BJ (cell line): ENCODE measurements at regions of chr16 and their contacts with region 1.

Region 1: GRCh38 chr16:85393674-85394483 is 219.2 kb upstream of the GSE1 start:
- DNase-seq: no peak
- H3K4me3 ChIP-seq: no peak overlapping the region
- H3K27me3 ChIP-seq: no peaks in the 10 kb centered on the region
- CTCF ChIP-seq: peak; percentile 96

Region 2: DNA sequence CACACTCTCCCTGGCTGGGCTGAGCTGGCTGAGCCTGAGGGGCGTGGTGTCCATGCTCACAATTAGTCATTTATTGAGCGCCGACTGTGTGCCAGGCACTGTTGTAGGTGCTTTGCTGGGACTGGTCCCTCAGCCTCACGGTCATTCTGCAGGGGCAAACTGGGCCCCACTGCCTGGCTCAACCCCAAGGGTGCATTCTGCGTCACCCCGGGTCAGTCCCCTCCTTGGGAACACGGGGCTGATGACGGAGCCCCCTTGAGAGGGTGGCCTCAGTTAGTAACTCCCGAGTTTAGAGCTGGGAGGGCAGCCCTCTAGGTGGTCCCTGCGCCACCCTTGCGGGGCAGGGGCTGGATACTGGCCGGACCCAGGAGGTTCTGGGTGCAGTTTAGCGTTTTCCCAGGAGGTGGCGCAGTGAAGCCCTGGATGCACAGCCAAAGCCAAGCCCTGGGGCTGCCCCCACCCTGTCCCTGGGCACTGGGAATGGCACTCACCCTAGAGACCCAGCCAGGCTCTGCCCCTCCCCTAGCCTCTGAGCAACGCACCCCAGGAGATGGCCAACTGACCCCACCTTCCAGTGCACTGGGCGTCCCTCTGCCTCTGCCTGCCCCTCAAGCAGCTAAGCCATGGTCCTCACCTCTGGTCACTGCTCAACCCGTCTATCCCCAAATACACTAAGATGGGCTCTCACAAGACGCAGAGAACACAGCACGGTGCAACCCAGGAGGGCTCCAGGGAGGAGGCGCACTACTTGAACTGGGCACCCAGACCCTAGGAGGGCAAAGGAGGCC is 23.9 kb before region 1 on chr16:
- CTCF ChIA-PET with region 1: interaction called, 24 read pairs
- POLR2A ChIA-PET with region 1: no interaction called
- DNase-seq: no peak
- H3K4me3 ChIP-seq: no peak overlapping the region
- H3K27me3 ChIP-seq: no peaks in the 10 kb centered on the region
- CTCF ChIP-seq: peak; percentile 83

Region 3: GRCh38 chr16:85610508-85611332 is 216.8 kb after region 1 on chr16:
- CTCF ChIA-PET with region 1: interaction called, 24 read pairs
- POLR2A ChIA-PET with region 1: no interaction called
- DNase-seq: peak; percentile 19
- H3K4me3 ChIP-seq: peak overlapping the region; percentile 56
- H3K27me3 ChIP-seq: no peaks in the 10 kb centered on the region
- CTCF ChIP-seq: peak; percentile 98

Region 4: GRCh38 chr16:85615852-85616606 is 222.2 kb after region 1 on chr16:
- CTCF ChIA-PET with region 1: interaction called, 24 read pairs
- POLR2A ChIA-PET with region 1: no interaction called
- DNase-seq: no peak
- H3K4me3 ChIP-seq: no peak overlapping the region
- H3K27me3 ChIP-seq: no peaks in the 10 kb centered on the region
- CTCF ChIP-seq: peak; percentile 93